Posterior cingulate gyrus (tissue), 11 donors: ENCODE measurements at regions of chr3 and their contacts with region 1.

Region 1: DNA sequence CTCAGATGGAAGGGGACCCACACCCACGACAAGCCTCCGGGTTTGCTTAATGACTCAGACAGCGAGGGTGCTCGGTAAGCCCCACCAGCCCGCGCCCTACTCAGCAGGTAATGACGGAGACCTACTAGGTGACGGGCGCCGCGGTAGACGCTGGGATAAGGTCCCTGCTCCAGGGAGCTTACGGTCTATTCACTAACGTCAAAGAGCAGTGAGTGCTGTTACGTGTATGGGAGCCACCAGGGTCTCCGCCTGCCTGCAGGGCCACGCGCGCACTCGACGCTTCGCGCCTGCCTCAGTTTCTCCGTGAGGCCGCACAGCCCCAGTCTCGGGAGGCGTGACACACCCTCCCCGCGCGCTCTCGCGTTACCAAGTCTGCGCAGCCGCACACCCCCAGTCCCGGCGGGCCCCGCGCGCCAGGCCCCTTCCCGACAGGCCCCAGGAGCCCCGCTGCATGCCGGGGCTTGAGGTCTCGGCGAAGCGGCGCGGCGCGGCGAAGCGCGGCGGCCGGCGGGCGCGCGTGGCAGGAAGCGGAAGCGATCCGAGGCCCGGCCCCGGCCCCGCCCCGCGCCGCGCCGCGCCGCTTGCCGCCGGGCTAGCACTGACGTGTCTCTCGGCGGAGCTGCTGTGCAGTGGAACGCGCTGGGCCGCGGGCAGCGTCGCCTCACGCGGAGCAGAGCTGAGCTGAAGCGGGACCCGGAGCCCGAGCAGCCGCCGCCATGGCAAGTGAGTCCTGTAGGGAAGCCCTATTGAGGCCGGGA is at the start of gene SEC61A1:
- DNase-seq: peak; percentile 87 to 99 (median 91)

Region 2: DNA sequence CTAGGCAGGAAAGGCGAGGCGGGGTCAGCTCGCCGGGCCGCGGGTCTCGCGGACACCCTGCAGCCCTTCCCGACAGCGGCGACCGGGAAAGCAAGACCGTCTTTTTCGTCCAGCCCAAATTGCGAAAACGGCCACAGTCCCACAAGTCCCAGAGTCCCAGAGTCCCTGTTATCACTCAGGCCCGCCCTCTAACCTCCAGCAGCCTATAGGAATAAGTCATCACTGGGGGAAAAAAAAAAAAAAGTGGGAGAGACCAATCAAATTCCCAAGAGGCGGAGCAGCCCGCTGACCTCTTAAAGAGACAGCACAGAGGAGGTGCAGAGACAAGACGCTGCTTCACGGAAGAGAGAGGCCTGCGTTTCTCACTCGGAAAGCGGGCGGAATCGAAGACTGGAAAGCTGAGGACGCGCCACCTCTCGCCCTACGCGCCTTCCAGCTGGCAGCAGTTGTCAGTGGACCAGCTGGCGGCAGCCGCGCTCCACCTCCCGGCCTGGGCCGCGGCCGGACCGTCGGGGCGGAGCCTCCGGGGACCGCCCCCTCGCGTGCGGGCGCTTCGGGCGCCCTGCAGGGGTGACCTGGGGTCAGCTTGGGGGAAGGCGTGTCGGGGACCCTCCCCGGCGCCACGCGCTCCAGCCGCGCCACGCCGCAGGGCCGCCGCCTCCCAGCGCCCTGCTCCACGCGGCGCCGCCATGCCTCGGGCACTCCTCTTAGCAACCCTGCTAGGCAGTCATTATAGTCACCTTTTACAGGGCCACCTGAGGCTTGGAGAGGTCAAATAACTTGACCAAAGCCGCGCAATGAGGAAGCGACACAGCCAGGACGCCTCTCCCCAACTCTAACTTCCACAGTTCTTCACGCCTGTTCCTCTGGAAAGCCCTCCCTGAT is 461.2 kb before region 1 on chr3 and contains the start of gene TPRA1:
- intact Hi-C with region 1: loop called (anchors 10 kb)
- DNase-seq: peak; percentile 80 to 98 (median 86)